PC-9 (cell line): ENCODE measurements at regions of chr5 and their contacts with region 1.

Region 1: DNA sequence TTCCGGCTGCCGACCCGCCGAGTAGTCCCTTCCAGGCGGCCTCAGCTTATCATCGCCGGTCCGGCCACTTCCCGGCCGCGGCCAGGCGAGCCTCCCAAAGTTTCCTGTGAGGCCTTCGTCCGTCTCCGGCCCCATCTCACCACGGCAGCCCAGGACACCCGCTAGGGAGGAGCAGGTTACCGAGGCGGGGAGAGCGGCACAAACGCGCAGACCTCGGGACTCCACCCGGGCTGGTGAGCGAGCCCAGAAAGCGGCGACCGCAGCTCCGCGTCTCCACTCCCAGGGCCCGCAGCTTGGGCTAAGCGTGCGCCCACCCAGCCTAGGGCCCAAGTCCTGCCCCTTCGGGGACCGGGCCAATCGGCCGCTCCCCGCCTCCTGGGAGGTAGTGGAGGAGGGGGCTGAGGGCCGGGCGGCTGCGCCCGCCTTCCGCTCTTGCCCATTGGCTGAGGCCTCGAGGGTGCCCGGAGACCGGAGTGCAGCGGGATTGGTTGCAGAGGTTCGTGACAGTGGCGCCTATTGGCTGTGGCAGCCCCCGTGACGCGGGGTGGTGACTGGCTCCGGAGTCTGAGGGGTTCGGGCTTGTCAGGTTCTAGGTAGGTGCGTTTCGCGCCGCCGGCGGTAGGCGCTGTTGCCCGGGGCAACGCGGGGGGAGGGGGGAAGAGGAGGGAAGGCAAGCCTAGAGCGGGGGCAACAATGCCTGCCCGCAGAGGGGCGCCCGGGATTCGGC is 867 bp downstream of the FER start:
- DNase-seq: peak; percentile 95 to 99
- H3K4me3 ChIP-seq: peak overlapping the region; percentile 87
- H3K27ac ChIP-seq: peak overlapping the region; percentile 91
- H3K4me1 ChIP-seq: peaks cover 18% of the 10 kb centered on the region; the same call in 1 of the 2 replicates
- H3K27me3 ChIP-seq: no peaks in the 10 kb centered on the region
- CTCF ChIP-seq: no peak

Region 2: DNA sequence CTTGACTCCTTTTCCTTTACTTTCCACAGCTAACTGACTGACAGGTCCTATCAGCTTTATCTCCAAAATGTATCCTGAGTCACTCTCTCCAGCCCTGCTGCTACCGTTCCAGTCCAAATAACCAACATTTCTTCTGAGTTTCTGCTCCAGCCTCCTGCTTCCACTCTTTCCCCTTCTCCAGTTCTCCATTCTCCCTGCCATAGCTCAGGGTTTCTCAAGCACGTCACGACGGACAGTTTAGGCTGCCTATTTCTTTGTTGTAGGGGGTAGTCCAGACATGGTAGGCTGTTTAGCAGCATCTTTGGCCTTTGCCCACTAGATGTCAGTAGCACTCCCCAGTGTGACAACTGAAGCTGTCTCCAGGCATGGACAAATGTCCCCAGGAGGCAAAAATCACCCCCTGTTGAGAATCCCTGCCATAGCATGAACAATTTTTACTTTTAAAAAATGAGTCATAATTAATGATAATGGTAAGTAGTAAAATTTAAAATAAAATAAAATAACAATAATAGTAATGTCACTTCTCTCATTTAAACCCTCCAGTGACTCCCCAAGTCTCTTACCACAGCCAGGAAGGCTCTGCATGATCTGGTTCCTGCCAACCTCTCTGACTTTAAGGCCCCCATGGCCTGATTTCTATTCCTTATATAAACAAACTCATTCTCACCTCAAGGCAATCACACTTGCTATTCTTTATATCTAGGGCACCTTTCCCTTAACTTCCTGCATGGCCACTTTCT is 106.2 kb before region 1 on chr5:
- CTCF ChIA-PET with region 1: no interaction called
- POLR2A ChIA-PET with region 1: no interaction called
- intact Hi-C with region 1: loop called (anchors 1 kb)
- DNase-seq: peak; percentile 55 to 57
- H3K4me3 ChIP-seq: peak overlapping the region; percentile 30; the same call in 1 of the 2 replicates
- H3K27ac ChIP-seq: no peak overlapping the region
- H3K4me1 ChIP-seq: peaks cover 6% of the 10 kb centered on the region; the same call in 1 of the 2 replicates
- H3K27me3 ChIP-seq: no peaks in the 10 kb centered on the region
- CTCF ChIP-seq: peak; percentile 88

Region 3: GRCh38 chr5:108681079-108681921 is 67.3 kb before region 1 on chr5:
- CTCF ChIA-PET with region 1: no interaction called
- POLR2A ChIA-PET with region 1: no interaction called
- intact Hi-C with region 1: loop called (anchors 5 kb)
- DNase-seq: peak; percentile 33 to 47
- H3K4me3 ChIP-seq: no peak overlapping the region
- H3K27ac ChIP-seq: no peak overlapping the region
- H3K4me1 ChIP-seq: no peaks in the 10 kb centered on the region
- H3K27me3 ChIP-seq: no peaks in the 10 kb centered on the region
- CTCF ChIP-seq: peak; percentile 82

Region 4: DNA sequence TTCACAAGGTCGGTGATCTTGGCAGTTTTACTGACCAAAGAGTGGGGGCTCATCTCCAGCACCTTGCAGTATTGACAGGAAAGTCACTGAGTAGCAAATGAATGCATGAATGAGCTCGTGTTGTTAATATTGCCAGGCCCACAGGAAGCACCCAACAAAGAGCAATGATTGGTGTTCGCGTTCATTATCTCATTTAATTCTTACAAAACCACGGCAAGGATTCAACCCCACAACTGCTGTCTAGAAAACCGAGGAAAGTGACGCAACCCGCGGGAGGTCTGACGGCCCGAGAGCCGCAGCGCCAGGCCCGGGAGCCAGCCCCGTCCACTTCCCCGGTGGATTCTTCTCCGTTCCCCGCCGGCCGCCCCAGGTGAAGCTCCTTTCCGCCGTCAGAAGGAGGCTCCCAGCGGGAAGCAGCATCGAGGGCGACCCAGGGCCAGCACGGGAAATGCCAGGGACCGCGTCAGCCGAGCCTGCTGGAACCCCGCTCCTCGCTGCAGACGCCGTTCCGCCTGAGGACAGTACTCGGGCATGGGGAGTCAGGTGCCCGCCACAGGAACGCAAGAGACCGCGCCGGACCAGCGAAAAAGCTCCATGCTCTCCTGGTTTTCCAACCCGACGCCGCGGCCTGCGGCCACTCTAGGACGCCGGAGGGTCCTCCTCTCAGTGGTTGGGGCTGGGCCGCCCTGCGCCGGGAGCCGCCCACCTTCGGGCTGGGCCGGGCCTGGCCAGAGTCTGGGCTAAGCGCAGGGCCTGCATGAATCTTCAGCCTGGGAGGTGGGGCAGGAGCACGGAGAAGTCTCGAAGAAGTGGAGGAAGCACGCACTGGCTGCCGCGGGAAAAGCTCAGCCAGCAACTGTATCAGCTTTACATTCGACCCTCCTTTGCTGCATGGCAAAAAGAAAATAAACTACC is 20.7 kb before region 1 on chr5:
- CTCF ChIA-PET with region 1: no interaction called
- POLR2A ChIA-PET with region 1: interaction called, 4 read pairs
- intact Hi-C with region 1: loop called (anchors 1 kb)
- DNase-seq: peak; percentile 80 to 93
- H3K4me3 ChIP-seq: peak overlapping the region; percentile 73
- H3K27ac ChIP-seq: peak overlapping the region; percentile 78
- H3K4me1 ChIP-seq: peaks cover 37% of the 10 kb centered on the region
- H3K27me3 ChIP-seq: no peaks in the 10 kb centered on the region
- CTCF ChIP-seq: no peak

Region 5: DNA sequence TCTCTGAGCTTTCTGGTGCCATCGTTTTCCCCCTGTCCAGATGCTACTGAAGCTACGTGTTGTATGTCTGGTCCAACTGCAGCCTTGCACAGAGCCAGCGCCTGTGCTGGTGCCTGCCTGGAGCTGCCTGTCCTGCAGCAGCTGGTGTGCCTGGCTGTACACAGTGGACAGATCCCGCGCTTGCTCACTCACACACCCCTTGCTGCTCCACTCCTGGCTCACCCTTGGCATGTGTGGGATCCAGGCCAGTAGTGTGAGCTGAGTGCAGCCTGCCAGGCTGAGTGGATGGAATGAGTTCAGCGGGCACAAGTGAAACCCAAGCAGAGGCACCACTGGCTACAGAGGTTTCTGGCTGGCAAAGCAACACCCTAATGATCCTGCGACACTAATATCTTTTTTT is 39.6 kb after region 1 on chr5:
- CTCF ChIA-PET with region 1: no interaction called
- POLR2A ChIA-PET with region 1: no interaction called
- intact Hi-C with region 1: no loop called
- DNase-seq: no peak
- H3K4me3 ChIP-seq: no peak overlapping the region
- H3K27ac ChIP-seq: no peak overlapping the region
- H3K4me1 ChIP-seq: 0 out of 2 replicates have a peak, but pooled peaks cover 4% of the 10 kb centered on the region
- H3K27me3 ChIP-seq: no peaks in the 10 kb centered on the region
- CTCF ChIP-seq: no peak

Region 6: GRCh38 chr5:108919591-108920326 is 171.2 kb after region 1 on chr5:
- CTCF ChIA-PET with region 1: interaction called, 19 read pairs
- POLR2A ChIA-PET with region 1: no interaction called
- intact Hi-C with region 1: no loop called
- DNase-seq: no peak
- H3K4me3 ChIP-seq: no peak overlapping the region
- H3K27ac ChIP-seq: no peak overlapping the region
- H3K4me1 ChIP-seq: no peaks in the 10 kb centered on the region
- H3K27me3 ChIP-seq: no peaks in the 10 kb centered on the region
- CTCF ChIP-seq: peak; percentile 71

Region 7: DNA sequence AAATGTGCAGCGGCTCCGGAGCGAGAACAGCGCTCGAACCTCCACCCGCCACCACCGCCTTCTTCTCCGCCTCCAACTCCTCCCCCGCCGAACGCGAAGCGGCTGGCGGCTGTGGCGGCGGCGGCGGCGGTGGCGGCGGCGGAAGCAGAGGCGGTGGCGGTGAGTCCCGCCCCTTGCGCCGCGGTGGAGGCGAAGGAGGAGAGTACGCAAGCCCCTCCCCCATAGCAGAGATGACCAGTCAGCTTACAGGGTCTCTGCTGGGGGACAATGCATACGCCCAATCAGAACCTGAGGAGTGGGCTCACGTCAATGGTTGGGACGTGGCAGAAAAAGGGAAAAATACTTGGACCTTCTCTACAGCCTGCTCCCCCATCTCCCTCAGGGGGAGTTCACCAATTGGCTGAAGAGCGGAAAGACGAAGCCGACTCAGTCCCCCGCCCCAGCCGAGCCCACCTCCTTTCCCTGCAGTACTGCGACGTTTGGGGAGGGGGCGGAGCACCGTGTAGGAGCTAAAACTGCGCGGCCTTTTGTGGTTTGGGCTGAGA is 661.4 kb after region 1 on chr5 and contains the start of gene PJA2:
- CTCF ChIA-PET with region 1: no interaction called
- POLR2A ChIA-PET with region 1: no interaction called
- intact Hi-C with region 1: loop called (anchors 1 kb)
- DNase-seq: peak; percentile 97 to 98
- H3K4me3 ChIP-seq: peak within 1 kb of the TSS; percentile 63
- H3K27ac ChIP-seq: peak within 1 kb of the TSS; percentile 81
- H3K4me1 ChIP-seq: peaks cover 34% of the 10 kb centered on the region
- H3K27me3 ChIP-seq: no peaks in the 10 kb centered on the region
- CTCF ChIP-seq: no peak
- total RNA-seq, gene PJA2: 23.0 and 29.9 TPM in 2 replicates

Region 8: DNA sequence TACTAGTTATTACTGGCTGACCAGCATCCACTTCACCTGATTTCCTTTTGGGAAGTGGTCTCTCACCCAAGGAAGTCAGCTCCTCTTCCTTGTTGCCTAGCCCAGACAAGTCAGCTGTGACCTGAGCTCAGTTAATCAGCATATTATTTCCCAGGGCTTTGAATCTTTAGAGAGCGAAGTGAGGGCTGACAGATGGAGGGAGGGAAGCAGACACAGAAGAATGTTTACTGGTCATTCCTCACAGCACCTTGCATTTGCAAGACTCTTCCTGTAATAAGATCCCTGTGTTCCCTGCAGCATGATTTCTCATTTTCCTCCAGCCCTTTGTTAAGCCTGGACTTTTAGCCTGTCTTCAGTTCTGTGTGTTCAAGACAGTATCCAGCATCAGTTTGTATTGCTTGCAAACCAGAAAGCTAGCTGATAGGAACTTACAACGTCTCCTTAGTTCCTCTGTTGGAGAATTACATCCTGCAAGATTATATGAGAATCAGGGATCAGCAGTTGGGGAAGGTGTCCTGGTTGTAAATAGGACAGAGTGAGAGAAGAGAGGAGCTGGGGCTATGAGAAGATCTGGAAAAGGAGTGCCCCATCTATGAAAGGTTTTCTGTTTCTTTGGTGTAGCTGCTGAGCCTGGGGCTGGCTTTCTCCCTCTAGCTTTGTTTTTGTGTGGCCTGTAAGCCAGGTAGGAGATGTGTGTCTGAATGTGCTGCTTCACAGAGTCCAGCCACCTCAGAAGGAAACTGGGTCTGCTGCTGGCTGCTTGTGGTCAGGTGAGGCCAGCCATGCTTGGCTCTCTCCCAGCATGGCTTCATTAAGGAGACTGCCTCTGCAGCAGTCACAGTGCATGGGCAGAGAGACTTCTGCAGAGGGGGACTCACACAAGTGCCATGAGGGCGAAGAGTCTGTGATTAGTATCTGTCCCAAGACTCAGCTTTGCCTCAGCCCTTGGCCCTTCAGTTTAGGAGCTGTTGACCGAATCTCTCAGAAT is 991.5 kb after region 1 on chr5:
- CTCF ChIA-PET with region 1: no interaction called
- POLR2A ChIA-PET with region 1: no interaction called
- intact Hi-C with region 1: loop called (anchors 5 kb)
- DNase-seq: peak; percentile 39 to 49
- H3K4me3 ChIP-seq: no peak overlapping the region
- H3K27ac ChIP-seq: peak overlapping the region; percentile 27; the same call in 1 of the 2 replicates
- H3K4me1 ChIP-seq: peaks cover 29% of the 10 kb centered on the region
- H3K27me3 ChIP-seq: no peaks in the 10 kb centered on the region
- CTCF ChIP-seq: no peak